ENCODE measurements at regions of chr22 and their contacts with region 1.

Region 1: GRCh38 chr22:38398609-38399461 is 56.2 kb downstream of the KCNJ4 start:
- DNase-seq: peak; percentile 76
- H3K4me3 Mint-ChIP-seq: peak overlapping the region; percentile 84
- H3K27ac Mint-ChIP-seq: peak overlapping the region; percentile 23
- H3K4me1 Mint-ChIP-seq: peaks cover 35% of the 10 kb centered on the region
- H3K27me3 Mint-ChIP-seq: peaks cover 9% of the 10 kb centered on the region

Region 2: DNA sequence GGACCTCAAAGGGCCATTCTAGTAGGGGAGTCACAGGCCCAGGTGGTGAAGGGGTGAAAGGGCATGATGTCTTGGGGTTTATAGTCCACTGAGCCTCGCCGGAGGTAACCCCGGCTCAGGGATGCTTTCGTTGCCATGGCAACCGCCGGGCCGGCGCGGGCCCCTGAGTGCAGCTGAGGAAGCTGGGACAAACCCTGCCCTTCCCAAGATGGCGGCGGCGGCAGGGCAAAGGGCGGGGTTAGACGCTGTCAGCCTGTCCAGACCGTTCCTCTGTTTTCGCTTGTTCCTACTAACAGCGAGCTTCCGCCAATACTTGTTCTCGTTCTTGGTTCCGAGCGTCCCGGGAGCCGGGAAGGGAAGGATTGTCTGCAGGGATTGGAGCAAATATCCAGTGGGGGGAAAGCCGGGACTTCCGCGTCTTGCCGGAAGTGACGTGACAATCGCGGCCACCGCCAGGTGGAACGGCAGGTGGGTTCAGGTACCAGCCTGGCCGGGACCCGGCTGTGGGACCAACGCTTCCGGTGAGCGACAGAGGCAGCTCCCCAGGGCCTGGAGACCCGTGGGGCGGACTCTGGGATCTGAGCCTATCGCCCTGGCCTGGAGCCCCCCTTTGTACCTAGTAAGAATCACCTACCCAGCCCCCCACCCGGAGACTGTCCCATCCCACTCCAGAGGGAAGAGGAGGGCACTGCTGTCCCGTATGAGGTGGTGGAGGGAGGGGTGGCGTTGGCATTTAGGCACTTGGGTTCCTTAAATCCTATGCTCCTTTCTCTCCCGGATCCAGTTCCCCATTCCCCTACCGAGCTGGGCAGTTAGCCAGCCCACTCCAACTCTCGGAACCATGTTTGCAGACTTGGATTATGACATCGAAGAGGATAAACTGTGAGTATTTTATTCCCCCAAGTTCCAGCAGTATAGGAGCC is 341.6 kb before region 1 on chr22 and contains the start of gene PICK1:
- intact Hi-C with region 1: loop called (anchors 1 kb)
- DNase-seq: peak; percentile 66
- H3K4me3 Mint-ChIP-seq: peak within 1 kb of the TSS; percentile 89
- H3K27ac Mint-ChIP-seq: peak within 1 kb of the TSS; percentile 87
- H3K4me1 Mint-ChIP-seq: peaks cover 20% of the 10 kb centered on the region
- H3K27me3 Mint-ChIP-seq: peaks cover 4% of the 10 kb centered on the region
- total RNA-seq, gene PICK1: 12.0 and 14.8 TPM in 2 replicates

Region 3: DNA sequence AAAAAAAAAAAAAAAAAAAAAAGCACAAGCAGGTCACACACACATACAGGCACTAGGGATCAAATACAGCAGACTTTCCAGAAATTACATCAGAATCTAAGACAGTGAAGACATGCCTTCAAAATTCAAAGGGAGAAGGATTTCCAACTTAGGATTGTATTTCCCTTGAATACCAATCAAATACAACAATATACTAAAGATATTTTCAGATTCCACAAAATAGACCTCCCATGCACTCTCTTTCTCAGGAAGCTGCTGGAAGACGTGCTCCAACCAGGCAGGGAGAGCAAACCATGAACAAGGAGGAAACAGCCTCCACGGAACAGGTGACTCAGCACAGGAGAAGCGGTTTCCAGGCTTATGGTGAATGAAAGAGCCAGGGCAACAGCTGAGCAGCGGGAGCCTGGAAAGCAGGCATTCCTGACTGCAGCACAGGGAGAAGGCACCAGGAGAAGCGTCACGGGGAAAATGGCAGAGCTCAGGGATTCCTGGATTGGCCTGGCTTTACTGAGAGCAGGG is 158.0 kb before region 1 on chr22:
- intact Hi-C with region 1: no loop called
- DNase-seq: no peak
- H3K4me3 Mint-ChIP-seq: no peak overlapping the region
- H3K27ac Mint-ChIP-seq: no peak overlapping the region
- H3K4me1 Mint-ChIP-seq: no peaks in the 10 kb centered on the region
- H3K27me3 Mint-ChIP-seq: no peaks in the 10 kb centered on the region

Region 4: GRCh38 chr22:38317122-38317994 is 81.5 kb before region 1 on chr22 and contains the start of gene CSNK1E:
- intact Hi-C with region 1: loop called (anchors 2 kb)
- DNase-seq: peak; percentile 74
- H3K4me3 Mint-ChIP-seq: peak within 1 kb of the TSS; percentile 90
- H3K27ac Mint-ChIP-seq: peak within 1 kb of the TSS; percentile 87
- H3K4me1 Mint-ChIP-seq: peaks cover 44% of the 10 kb centered on the region
- H3K27me3 Mint-ChIP-seq: no peaks in the 10 kb centered on the region
- total RNA-seq, gene CSNK1E: 151 and 154 TPM in 2 replicates

Region 5: DNA sequence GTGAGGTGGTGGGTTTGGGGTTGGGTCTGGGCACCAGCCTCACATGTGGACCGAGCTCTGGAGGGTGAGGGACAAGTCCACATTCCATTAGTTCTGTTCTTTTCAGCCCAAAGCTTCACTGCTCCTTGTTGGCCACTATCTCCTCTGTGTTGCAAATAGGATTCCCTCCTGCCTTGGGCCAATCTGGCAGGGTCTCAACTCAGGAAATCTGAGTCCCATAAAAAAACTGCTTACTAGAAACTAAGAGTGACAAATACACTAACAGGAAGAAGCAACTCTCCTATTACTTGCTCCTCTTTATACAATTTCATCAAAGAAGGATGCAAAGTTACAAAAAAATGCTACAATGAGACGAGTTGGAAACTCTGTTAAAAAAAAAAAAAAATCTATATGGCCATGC is 15.4 kb before region 1 on chr22:
- intact Hi-C with region 1: no loop called
- DNase-seq: no peak
- H3K4me3 Mint-ChIP-seq: no peak overlapping the region
- H3K27ac Mint-ChIP-seq: no peak overlapping the region
- H3K4me1 Mint-ChIP-seq: peaks cover 13% of the 10 kb centered on the region
- H3K27me3 Mint-ChIP-seq: no peaks in the 10 kb centered on the region

Region 6: GRCh38 chr22:38455530-38456271 is 56.9 kb after region 1 on chr22:
- intact Hi-C with region 1: no loop called
- DNase-seq: no peak
- H3K4me3 Mint-ChIP-seq: no peak overlapping the region
- H3K27ac Mint-ChIP-seq: no peak overlapping the region
- H3K4me1 Mint-ChIP-seq: no peaks in the 10 kb centered on the region
- H3K27me3 Mint-ChIP-seq: peaks cover 68% of the 10 kb centered on the region

Measured in activated T-helper 1 cell treated with anti-CD3 and anti-CD28 coated beads, Interleukin-12 subunit alpha, Interleukin-12 subunit beta, Interleukin-2, Interleukin-4 antibody, amounts not matched to agents 30 ng/mL and 10 ng/mL and 1 ng/mL, durations not matched to agents 14 hours and 24 hours and 36 hours (primary cell).